Body of pancreas (tissue), 4 donors: ENCODE measurements at regions of chr11 and their contacts with region 1.

Region 1: GRCh38 chr11:50030193-50030592 is 2.5 kb upstream of the OR4C45 start:
- DNase-seq: no peak
- ATAC-seq: no peak
- H3K4me3 ChIP-seq: no peak overlapping the region
- H3K27ac ChIP-seq: no peak overlapping the region
- H3K4me1 ChIP-seq: no peaks in the 10 kb centered on the region
- H3K27me3 ChIP-seq: no peaks in the 10 kb centered on the region
- CTCF ChIP-seq: no peak
- POLR2A ChIP-seq: no peak

Region 2: DNA sequence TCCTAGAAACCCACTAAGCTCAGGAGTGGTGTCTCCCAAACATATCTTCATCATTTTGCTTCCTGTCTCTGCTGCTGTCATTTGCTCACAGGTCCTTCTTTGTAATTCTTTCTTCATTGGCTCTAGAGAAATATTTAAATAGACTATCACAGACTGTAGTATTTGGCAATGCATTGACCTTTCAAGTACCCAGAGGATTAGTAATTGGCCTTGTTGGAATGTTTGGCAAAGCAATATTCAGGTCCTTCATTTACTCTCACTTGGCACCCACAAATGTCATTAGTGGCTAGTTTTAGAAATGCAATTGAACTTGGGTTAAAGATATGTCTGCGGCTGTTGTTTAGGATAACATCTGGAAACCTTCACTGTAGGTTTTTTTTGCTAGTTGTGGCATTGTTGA is 1675.5 kb before region 1 on chr11:
- intact Hi-C with region 1: loop called (anchors 5 kb)
- DNase-seq: no peak
- ATAC-seq: no peak
- H3K4me3 ChIP-seq: no peak overlapping the region
- H3K27ac ChIP-seq: no peak overlapping the region
- H3K4me1 ChIP-seq: no peaks in the 10 kb centered on the region
- H3K27me3 ChIP-seq: no peaks in the 10 kb centered on the region
- CTCF ChIP-seq: no peak
- POLR2A ChIP-seq: no peak

Region 3: GRCh38 chr11:50088231-50088630 is 58.0 kb after region 1 on chr11:
- intact Hi-C with region 1: no loop called
- DNase-seq: no peak
- ATAC-seq: no peak
- H3K4me3 ChIP-seq: no peak overlapping the region
- H3K27ac ChIP-seq: no peak overlapping the region
- H3K4me1 ChIP-seq: no peaks in the 10 kb centered on the region
- H3K27me3 ChIP-seq: no peaks in the 10 kb centered on the region
- CTCF ChIP-seq: no peak
- POLR2A ChIP-seq: no peak